ENCODE measurements at regions of chr15 and their contacts with region 1.

Region 1: GRCh38 chr15:96327155-96327741 is 3.3 kb upstream of the NR2F2 start:
- DNase-seq: peak; percentile 64
- H3K4me3 ChIP-seq: peak overlapping the region; percentile 42 to 50
- H3K27ac ChIP-seq: peak overlapping the region; percentile 83 to 92
- H3K4me1 ChIP-seq: no peaks in the 10 kb centered on the region
- H3K27me3 ChIP-seq: no peaks in the 10 kb centered on the region
- CTCF ChIP-seq: peak; percentile 17 to 83 (median 72)
- POLR2A ChIP-seq: no peak

Region 2: GRCh38 chr15:95162967-95163531 is 1164.2 kb before region 1 on chr15:
- intact Hi-C with region 1: loop called (anchors 10 kb)
- DNase-seq: no peak
- H3K4me3 ChIP-seq: no peak overlapping the region
- H3K27ac ChIP-seq: peak overlapping the region in 1 of 2 donors; percentile 36
- H3K4me1 ChIP-seq: no peaks in the 10 kb centered on the region
- H3K27me3 ChIP-seq: no peaks in the 10 kb centered on the region
- CTCF ChIP-seq: no peak
- POLR2A ChIP-seq: no peak

Region 3: GRCh38 chr15:95266451-95267061 is 1060.7 kb before region 1 on chr15:
- intact Hi-C with region 1: loop called (anchors 2 kb)
- DNase-seq: no peak
- H3K4me3 ChIP-seq: no peak overlapping the region
- H3K27ac ChIP-seq: peak overlapping the region; percentile 51 to 57
- H3K4me1 ChIP-seq: no peaks in the 10 kb centered on the region
- H3K27me3 ChIP-seq: no peaks in the 10 kb centered on the region
- CTCF ChIP-seq: no peak
- POLR2A ChIP-seq: no peak

Region 4: DNA sequence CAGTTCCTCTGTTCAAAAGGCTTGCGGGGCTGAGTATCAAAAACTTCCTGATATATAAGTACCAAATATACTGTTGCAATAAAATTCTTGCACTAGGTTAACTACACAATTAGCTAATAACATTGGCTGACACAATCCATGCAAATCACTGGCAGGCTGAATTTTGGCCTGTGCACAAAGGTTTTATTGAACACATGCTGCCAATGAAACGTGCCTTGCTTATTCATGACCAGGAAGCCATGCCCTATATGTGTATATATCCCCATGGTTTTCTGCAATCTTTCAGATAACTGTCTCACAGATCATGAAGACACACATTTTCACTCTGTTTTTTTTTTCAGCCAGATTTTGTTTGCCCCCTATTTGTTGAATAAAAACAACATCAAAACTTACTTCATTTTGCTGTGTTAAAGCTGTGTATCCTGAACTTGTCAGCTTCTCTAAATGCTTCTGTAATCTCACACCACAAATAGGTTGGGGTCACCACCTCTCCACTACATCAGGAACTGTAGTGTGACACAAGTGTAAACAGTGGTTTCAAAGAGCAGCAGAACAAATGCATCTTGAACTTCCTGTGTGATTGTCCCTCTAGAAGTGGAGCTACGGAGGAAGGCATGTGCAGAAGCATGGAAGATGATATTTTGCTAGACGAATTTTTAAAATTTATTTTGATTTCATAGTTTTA is 917.5 kb before region 1 on chr15:
- intact Hi-C with region 1: loop called (anchors 10 kb)
- DNase-seq: no peak
- H3K4me3 ChIP-seq: no peak overlapping the region
- H3K27ac ChIP-seq: no peak overlapping the region
- H3K4me1 ChIP-seq: no peaks in the 10 kb centered on the region
- H3K27me3 ChIP-seq: no peaks in the 10 kb centered on the region
- CTCF ChIP-seq: no peak
- POLR2A ChIP-seq: no peak

Region 5: DNA sequence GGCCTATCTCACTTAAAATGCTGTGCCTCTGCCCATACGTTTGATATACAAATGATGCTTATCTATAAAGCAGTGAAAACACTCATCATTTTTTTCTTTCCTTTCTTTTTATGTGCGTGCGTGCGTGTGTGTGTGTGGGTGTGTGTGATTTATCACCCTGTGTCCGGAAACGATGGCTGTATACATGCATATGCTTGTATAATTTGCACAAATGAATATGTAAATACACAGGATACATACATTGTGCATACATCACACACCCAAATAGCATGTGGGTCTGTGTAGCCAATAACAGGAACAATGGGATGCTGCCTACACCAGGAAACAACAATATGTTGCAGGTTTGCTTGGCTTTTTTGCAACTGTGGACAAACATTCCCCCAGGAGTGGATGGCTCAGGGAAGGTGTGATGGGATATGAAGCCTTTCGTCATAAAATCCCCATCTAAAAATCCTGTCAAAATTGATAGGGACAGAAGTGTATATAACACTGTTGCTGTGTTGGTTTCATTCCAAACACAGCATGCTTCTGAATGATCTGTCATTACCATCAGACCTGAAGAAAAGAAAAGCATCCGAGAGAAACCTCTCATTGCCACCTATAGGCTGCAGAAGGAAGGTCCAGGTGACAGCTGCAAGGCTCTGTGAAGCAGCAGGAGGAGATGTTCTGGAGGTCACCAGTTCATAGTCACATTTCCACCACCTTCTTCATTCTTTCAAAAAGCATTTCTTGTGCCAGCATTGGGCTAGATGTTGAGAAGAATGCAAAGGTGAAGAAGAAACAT is 500.6 kb before region 1 on chr15:
- intact Hi-C with region 1: no loop called
- DNase-seq: no peak
- H3K4me3 ChIP-seq: no peak overlapping the region
- H3K27ac ChIP-seq: no peak overlapping the region
- H3K4me1 ChIP-seq: no peaks in the 10 kb centered on the region
- H3K27me3 ChIP-seq: no peaks in the 10 kb centered on the region
- CTCF ChIP-seq: no peak
- POLR2A ChIP-seq: no peak

Region 6: GRCh38 chr15:96053031-96053780 is 274.0 kb before region 1 on chr15:
- intact Hi-C with region 1: loop called (anchors 10 kb)
- DNase-seq: peak; percentile 42
- H3K4me3 ChIP-seq: peak overlapping the region; percentile 8 to 16
- H3K27ac ChIP-seq: peak overlapping the region; percentile 18 to 54
- H3K4me1 ChIP-seq: no peaks in the 10 kb centered on the region
- H3K27me3 ChIP-seq: no peaks in the 10 kb centered on the region
- CTCF ChIP-seq: no peak
- POLR2A ChIP-seq: no peak

Region 7: DNA sequence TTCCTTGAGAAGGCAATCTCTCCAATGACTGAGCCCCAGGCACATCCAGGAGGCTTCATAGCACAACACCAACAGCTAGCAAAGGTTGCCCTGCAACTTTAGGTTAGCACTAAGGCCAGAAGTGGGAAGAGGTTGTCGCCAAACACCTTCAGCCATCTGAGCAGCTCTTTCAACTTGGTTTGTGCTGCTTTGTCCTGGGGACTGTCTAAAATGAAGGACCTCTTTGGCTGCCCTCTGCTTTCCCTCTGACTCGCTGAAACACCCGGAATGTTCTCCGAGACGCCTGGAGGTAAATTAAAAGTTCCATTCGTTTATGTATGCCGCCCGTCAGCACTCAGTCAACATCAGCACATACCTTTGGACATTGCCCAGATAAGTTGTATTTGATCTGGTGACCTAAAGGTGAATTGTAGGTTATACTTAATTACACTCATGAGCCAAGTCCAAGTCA is 117.9 kb before region 1 on chr15:
- intact Hi-C with region 1: no loop called
- DNase-seq: no peak
- H3K4me3 ChIP-seq: no peak overlapping the region
- H3K27ac ChIP-seq: no peak overlapping the region
- H3K4me1 ChIP-seq: no peaks in the 10 kb centered on the region
- H3K27me3 ChIP-seq: no peaks in the 10 kb centered on the region
- CTCF ChIP-seq: no peak
- POLR2A ChIP-seq: no peak

Region 8: DNA sequence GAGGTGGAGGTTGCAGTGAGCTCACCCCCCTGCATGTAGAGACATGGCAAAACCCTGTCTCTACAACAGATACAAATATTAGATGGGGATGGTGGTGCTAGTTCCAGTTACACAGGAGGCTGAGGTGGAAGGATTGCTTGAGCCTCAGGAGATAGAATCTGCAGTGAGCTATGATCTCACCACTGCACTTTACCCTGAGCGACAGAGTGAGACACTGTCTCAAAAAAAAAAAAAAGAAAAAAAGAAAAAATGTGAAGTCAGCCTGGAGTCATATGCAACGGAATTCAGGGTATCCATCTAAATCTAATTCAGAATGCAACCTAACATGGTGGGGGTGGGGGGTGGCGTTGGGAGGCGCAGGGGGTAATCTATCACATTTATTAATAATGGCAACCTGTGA is 33.8 kb before region 1 on chr15:
- intact Hi-C with region 1: no loop called
- DNase-seq: no peak
- H3K4me3 ChIP-seq: no peak overlapping the region
- H3K27ac ChIP-seq: no peak overlapping the region
- H3K4me1 ChIP-seq: no peaks in the 10 kb centered on the region
- H3K27me3 ChIP-seq: no peaks in the 10 kb centered on the region
- CTCF ChIP-seq: no peak
- POLR2A ChIP-seq: no peak

Region 9: DNA sequence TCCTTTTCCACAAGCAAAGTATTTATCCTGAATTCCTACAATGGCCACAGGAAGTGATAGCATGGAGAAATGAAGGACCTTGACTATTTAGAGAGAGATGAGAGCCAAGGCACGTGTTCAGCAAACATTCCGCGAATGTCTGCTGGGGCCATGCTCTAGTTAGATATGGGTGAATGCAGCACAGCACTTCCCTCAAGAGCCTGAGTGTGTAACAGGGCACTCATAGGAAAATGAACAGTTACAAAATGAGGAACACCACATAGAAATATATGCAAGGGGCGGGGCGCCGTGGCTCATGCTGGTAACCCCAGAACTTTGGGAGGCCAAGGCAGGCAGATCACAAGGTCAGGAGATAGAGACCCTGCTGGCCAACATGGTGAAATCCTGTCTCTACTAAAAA is 410.2 kb after region 1 on chr15:
- intact Hi-C with region 1: no loop called
- DNase-seq: no peak
- H3K4me3 ChIP-seq: no peak overlapping the region
- H3K27ac ChIP-seq: no peak overlapping the region
- H3K4me1 ChIP-seq: no peaks in the 10 kb centered on the region
- H3K27me3 ChIP-seq: no peaks in the 10 kb centered on the region
- CTCF ChIP-seq: no peak
- POLR2A ChIP-seq: no peak